ENCODE measurements at regions of chr10 and their contacts with region 1.

Region 1: GRCh38 chr10:23702977-23703414 is 264.1 kb downstream of the OTUD1 start:
- DNase-seq: peak; percentile 85
- H3K4me3 Mint-ChIP-seq: no peak overlapping the region
- H3K27ac Mint-ChIP-seq: no peak overlapping the region
- H3K4me1 Mint-ChIP-seq: peaks cover 2% of the 10 kb centered on the region
- H3K27me3 Mint-ChIP-seq: peaks cover 18% of the 10 kb centered on the region

Region 2: GRCh38 chr10:23516530-23516929 is 186.5 kb before region 1 on chr10:
- intact Hi-C with region 1: loop called (anchors 1 kb)
- DNase-seq: peak; percentile 55
- H3K4me3 Mint-ChIP-seq: no peak overlapping the region
- H3K27ac Mint-ChIP-seq: no peak overlapping the region
- H3K4me1 Mint-ChIP-seq: peaks cover 14% of the 10 kb centered on the region
- H3K27me3 Mint-ChIP-seq: peaks cover 10% of the 10 kb centered on the region

Region 3: DNA sequence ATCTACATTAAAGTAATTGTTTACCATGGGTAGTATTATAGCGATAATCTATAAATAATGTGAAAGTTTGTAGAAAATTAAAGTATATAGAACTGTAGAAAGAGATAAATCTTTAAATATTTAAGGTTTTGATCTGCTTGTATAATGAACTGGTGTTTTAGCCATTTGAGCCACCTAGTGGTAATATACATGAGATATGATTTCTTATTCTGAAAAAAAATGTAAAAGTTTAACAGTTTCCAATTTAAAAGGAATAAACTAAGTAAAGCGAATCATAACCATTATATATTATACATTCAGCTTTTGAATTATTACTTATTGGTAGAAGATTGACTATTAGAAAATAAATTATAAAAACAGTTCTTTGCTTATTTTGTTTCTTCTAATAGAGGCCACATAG is 172.9 kb before region 1 on chr10:
- intact Hi-C with region 1: loop called (anchors 5 kb)
- DNase-seq: no peak
- H3K4me3 Mint-ChIP-seq: no peak overlapping the region
- H3K27ac Mint-ChIP-seq: no peak overlapping the region
- H3K4me1 Mint-ChIP-seq: peaks cover 14% of the 10 kb centered on the region
- H3K27me3 Mint-ChIP-seq: no peaks in the 10 kb centered on the region

Measured in activated CD4-positive, alpha-beta T cell treated with anti-CD3 and anti-CD28 coated beads, Interleukin-2, amount 10 ng/mL, durations not matched to agents 24 days and 14 days (primary cell).